G401 (cell line): ENCODE measurements at regions of chr10 and their contacts with region 1.

Region 1: GRCh38 chr10:70233109-70233938 is at the start of gene PPA1:
- DNase-seq: peak; percentile 97
- total RNA-seq, gene PPA1: 283 and 317 TPM in 2 replicates

Region 2: GRCh38 chr10:70084189-70084588 is 149.1 kb before region 1 on chr10:
- in situ Hi-C with region 1: no loop called
- DNase-seq: no peak

Region 3: DNA sequence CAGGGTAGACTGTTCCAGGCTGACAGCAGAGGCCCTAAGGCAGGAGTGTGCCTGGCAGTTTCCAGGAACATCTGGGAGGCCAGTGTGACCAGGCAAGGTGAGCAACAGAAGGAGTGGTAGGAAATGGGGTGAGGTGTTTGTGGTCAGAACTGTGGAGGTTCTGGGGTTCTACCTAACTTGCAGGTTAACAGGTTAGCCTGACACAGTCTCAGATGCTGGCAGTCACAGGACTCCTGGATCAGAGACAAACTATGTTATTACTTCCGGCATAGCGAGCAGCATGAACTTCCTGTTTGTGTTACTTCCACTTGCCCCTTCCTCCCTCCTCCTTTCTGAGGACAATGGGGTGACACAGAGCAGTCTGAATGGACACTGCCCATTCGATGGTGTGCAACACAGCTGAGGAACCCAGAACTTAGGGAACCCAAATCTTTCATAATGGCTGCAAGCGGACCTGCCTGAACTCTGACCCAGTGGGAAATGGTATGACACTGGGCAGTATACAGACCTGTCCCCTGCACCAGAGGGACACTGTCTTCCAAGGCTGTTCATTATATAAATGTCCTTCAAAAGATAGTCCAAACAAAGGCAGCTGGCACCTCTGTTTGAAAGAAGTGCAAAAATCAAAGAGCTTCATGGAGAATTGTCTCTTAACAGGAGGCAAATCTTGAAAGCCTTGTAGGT is 59.1 kb before region 1 on chr10:
- in situ Hi-C with region 1: no loop called
- DNase-seq: no peak

Region 4: DNA sequence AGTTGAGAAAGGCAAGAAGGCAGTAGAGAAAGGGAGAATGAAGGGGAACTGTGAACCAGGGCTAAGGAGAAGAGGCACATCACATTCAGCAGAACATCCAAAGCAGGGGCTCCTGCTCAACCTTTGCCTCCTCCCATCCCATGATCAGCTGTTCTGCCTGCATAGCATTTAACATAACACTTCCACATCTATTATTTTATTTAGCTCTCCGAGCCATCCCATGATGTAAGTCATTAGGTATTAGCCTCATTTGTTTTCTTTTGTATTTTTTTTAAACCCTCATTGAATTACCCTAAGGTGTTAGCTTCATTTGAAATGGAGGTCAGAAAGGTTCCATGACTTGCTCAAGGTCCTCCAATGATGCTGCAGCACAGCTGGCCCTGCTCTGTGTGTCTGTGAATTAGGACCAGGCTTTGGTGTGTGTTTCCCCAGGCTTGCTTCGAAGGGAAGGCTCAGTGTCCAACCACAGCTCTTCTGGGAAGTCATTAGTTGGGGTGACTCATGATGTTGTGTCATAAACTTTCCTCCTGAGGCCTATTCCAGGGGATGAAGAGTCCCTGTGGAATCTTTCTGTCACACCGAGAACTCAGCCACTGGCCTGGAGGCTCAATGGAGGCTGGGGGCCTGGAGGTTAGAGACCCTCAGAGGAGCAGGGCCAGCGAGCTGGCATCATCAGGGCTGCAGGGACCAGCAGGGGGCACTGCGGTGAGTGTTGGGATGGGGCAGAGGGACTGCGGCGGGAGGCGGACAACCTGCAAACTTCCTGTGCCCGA is 34.0 kb after region 1 on chr10:
- in situ Hi-C with region 1: no loop called
- DNase-seq: no peak

Region 5: GRCh38 chr10:70331486-70332268 is 98.4 kb after region 1 on chr10:
- in situ Hi-C with region 1: loop called (anchors 25 kb)
- DNase-seq: peak; percentile 72